CD8-positive, alpha-beta T cell (primary cell): ENCODE measurements at regions of chr13 and their contacts with region 1.

Region 1: GRCh38 chr13:101144808-101145419 is 271.4 kb downstream of the NALCN start:
- DNase-seq: peak in 4 of 9 experiments; percentile 12 to 66 (median 37)
- ATAC-seq: peak; percentile 58
- H3K4me3 ChIP-seq: no peak overlapping the region
- H3K4me3 Mint-ChIP-seq: no peak overlapping the region
- H3K27ac ChIP-seq: no peak overlapping the region
- H3K27ac Mint-ChIP-seq: no peak overlapping the region
- H3K4me1 ChIP-seq: no peaks in the 10 kb centered on the region
- H3K4me1 Mint-ChIP-seq: no peaks in the 10 kb centered on the region
- H3K27me3 ChIP-seq: peaks cover 0 to 3% of the 10 kb centered on the region in 2 experiments
- H3K27me3 Mint-ChIP-seq: peaks cover 40% of the 10 kb centered on the region
- CTCF ChIP-seq: peak; percentile 71

Region 2: GRCh38 chr13:101185606-101186005 is 40.7 kb after region 1 on chr13:
- CTCF ChIA-PET with region 1: no interaction called
- POLR2A ChIA-PET with region 1: no interaction called
- intact Hi-C with region 1: no loop called
- DNase-seq: no peak
- ATAC-seq: no peak
- H3K4me3 ChIP-seq: no peak overlapping the region
- H3K4me3 Mint-ChIP-seq: no peak overlapping the region
- H3K27ac ChIP-seq: no peak overlapping the region
- H3K27ac Mint-ChIP-seq: no peak overlapping the region
- H3K4me1 ChIP-seq: no peaks in the 10 kb centered on the region
- H3K4me1 Mint-ChIP-seq: no peaks in the 10 kb centered on the region
- H3K27me3 ChIP-seq: no peaks in the 10 kb centered on the region
- H3K27me3 Mint-ChIP-seq: peaks cover 5% of the 10 kb centered on the region
- CTCF ChIP-seq: no peak

Region 3: DNA sequence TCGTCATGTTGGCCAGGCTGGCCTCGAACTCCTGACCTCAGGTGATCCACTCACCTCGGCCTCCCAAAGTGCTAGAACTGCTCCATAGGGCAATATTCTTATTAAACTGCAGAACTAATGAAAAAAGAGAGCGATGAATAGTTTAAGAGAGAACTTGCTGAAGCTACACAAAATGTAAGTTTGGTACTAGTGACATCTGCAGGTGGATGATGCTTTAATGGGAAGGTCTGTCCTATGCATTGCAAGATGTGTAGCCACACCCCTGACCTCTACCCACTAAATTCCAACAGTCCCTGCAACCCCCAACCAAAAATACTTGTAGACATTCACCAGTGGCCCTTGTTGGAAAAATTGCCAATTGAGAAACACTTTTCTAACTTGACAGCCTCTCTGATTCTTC is 153.6 kb after region 1 on chr13:
- CTCF ChIA-PET with region 1: interaction called, 8 read pairs
- POLR2A ChIA-PET with region 1: no interaction called
- intact Hi-C with region 1: loop called in 1 of 2 experiments (anchors 5 kb)
- DNase-seq: no peak
- ATAC-seq: no peak
- H3K4me3 ChIP-seq: no peak overlapping the region
- H3K4me3 Mint-ChIP-seq: no peak overlapping the region
- H3K27ac ChIP-seq: no peak overlapping the region
- H3K27ac Mint-ChIP-seq: no peak overlapping the region
- H3K4me1 ChIP-seq: no peaks in the 10 kb centered on the region
- H3K4me1 Mint-ChIP-seq: no peaks in the 10 kb centered on the region
- H3K27me3 ChIP-seq: no peaks in the 10 kb centered on the region
- H3K27me3 Mint-ChIP-seq: no peaks in the 10 kb centered on the region
- CTCF ChIP-seq: no peak

Region 4: DNA sequence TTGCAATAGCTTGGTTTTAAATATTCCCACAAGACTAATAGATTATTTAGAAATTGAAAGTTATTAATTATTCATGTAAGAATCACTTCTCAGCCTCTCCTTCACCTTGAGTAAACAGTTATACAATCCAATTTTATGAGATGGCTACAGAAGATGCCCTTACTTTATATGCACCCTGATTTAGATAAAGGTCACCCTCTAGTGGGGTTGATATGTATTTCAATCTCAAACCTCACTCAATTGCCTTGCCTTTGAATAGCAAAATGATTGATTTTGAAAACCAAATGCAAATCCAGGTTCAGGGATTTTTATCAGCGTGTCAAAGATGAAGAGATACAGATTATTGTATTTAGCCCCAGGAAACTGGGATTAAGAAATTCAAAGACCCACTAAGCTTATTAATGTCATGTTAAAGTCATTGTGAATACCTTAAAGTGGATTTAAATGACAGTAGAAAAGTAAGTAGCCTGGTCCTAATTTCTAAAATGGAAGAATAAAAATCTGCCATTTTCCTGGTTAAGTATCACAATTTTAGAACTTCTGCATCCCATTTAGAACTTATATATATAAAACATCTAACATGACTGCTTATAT is 612.6 kb after region 1 on chr13:
- CTCF ChIA-PET with region 1: interaction called, 11 read pairs
- POLR2A ChIA-PET with region 1: no interaction called
- intact Hi-C with region 1: loop called in 1 of 2 experiments (anchors 2 kb)
- DNase-seq: peak in 2 of 9 experiments; percentile 36 to 53
- ATAC-seq: no peak
- H3K4me3 ChIP-seq: no peak overlapping the region
- H3K4me3 Mint-ChIP-seq: no peak overlapping the region
- H3K27ac ChIP-seq: no peak overlapping the region
- H3K27ac Mint-ChIP-seq: no peak overlapping the region
- H3K4me1 ChIP-seq: no peaks in the 10 kb centered on the region
- H3K4me1 Mint-ChIP-seq: no peaks in the 10 kb centered on the region
- H3K27me3 ChIP-seq: no peaks in the 10 kb centered on the region
- H3K27me3 Mint-ChIP-seq: peaks cover 11% of the 10 kb centered on the region
- CTCF ChIP-seq: peak; percentile 60

Region 5: DNA sequence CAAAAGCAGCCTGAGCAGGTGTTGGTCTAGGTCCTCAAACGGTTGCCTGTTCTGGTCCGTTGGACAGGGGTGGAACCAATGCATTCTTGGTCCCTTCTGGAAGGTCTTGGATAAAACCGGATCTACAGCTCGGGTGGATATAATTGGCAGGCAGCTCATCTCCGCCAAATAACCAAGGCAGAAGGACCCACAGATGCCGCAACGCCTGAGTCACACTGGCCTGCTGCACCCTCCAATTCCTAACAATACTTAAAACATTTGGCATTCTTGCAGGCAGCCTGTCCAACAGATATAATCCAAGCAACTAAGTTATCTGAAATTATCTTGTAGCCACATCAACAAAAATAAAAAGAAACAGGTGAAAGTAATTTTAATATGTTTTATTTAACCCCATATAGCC is 1315.9 kb after region 1 on chr13:
- CTCF ChIA-PET with region 1: interaction called, 6 read pairs
- POLR2A ChIA-PET with region 1: no interaction called
- intact Hi-C with region 1: loop called in 1 of 2 experiments (anchors 1 kb)
- DNase-seq: no peak
- ATAC-seq: no peak
- H3K4me3 ChIP-seq: no peak overlapping the region
- H3K4me3 Mint-ChIP-seq: no peak overlapping the region
- H3K27ac ChIP-seq: no peak overlapping the region
- H3K27ac Mint-ChIP-seq: no peak overlapping the region
- H3K4me1 ChIP-seq: no peaks in the 10 kb centered on the region
- H3K4me1 Mint-ChIP-seq: peaks cover 5% of the 10 kb centered on the region
- H3K27me3 ChIP-seq: no peaks in the 10 kb centered on the region
- H3K27me3 Mint-ChIP-seq: peaks cover 15% of the 10 kb centered on the region
- CTCF ChIP-seq: no peak

Region 6: DNA sequence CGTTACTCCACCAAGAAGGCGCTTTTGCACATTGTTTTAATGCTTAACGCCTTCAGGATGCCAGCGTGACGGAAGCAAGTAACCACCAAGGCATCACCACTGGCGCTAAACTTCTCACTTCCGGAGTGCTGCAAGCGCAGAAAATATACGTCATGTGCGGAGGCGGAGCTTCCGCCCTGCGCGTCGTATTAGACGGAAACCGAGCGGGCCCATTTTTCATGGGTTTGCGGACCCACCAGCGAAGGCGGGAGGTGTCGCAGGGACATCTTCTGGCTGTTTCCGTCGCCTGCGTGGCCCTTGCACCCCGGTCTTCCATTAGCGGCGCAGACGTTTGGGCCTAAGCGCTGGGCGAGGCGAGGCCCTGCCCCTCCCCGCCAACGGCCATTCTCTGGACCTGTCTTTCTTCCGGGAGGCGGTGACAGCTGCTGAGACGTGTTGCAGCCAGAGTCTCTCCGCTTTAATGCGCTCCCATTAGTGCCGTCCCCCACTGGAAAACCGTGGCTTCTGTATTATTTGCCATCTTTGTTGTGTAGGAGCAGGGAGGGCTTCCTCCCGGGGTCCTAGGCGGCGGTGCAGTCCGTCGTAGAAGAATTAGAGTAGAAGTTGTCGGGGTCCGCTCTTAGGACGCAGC is 1700.8 kb after region 1 on chr13 and contains the start of gene ERCC5:
- CTCF ChIA-PET with region 1: no interaction called
- POLR2A ChIA-PET with region 1: no interaction called
- intact Hi-C with region 1: loop called in 1 of 2 experiments (anchors 5 kb)
- DNase-seq: peak; percentile 94 to 99 (median 97)
- ATAC-seq: peak; percentile 69
- H3K4me3 ChIP-seq: peak within 1 kb of the TSS; percentile 94 to 96
- H3K4me3 Mint-ChIP-seq: peak within 1 kb of the TSS; percentile 89
- H3K27ac ChIP-seq: peak within 1 kb of the TSS; percentile 98 to 99
- H3K27ac Mint-ChIP-seq: peak within 1 kb of the TSS; percentile 97
- H3K4me1 ChIP-seq: peaks cover 41% of the 10 kb centered on the region
- H3K4me1 Mint-ChIP-seq: peaks cover 45% of the 10 kb centered on the region
- H3K27me3 ChIP-seq: no peaks in the 10 kb centered on the region
- H3K27me3 Mint-ChIP-seq: no peaks in the 10 kb centered on the region
- CTCF ChIP-seq: no peak
- total RNA-seq, gene ERCC5: 109 to 121 TPM